Head of caudate nucleus (tissue), 42 donors: ENCODE measurements at regions of chr1 and their contacts with region 1.

Region 1: GRCh38 chr1:46724991-46725735 is 6.2 kb upstream of the EFCAB14 start:
- DNase-seq: peak; percentile 41 to 88 (median 74)

Region 2: GRCh38 chr1:46442317-46443161 is 282.6 kb before region 1 on chr1:
- intact Hi-C with region 1: loop called (anchors 10 kb)
- DNase-seq: peak; percentile 30 to 88 (median 72)

Region 3: DNA sequence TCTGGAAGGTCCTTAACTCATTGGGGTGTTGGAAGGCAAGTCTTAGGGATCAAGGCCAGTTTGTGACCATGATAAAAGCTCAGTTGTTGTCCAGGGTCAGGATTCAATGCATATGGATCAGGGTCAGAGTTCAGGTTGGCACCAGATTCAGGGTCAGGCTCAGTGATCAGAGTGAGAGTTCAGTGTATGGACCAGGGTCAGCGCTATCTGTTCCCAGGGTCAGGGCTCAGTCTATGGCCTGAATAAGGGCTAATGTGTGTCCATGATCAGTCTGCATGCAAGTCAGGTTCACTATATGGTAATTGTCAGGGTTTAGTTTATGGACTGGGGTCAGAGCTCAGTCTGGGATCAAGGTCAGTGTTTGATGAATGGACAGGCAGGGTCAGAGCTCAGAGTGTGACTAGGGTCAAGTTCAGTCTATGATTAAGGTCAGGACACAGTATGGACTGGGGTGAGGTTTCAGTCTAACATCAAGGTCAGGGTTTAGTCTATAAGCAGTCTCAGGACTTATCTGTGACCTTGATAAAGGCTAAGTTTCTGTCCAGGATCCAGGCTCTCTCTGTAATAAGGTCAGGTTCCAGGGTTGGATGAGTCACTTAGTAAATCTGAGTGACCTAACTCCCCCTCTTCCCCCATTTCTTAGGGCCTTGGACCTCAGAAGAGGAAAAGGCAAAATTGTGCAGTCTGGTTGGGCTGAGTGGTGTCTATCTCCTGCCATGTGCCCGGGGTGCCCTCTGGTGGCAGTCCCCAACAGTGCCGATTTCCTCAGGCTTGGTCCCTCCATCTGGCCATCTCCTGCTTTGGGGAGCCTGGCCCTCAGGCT is 197.5 kb before region 1 on chr1:
- intact Hi-C with region 1: loop called (anchors 5 kb)
- DNase-seq: peak; percentile 69 to 95 (median 88)

Region 4: GRCh38 chr1:46667782-46668760 is 57.1 kb before region 1 on chr1 and contains the start of gene ATPAF1:
- intact Hi-C with region 1: loop called (anchors 10 kb)
- DNase-seq: peak; percentile 36 to 87 (median 76)